ENCODE measurements at regions of chr9 and their contacts with region 1.

Region 1: DNA sequence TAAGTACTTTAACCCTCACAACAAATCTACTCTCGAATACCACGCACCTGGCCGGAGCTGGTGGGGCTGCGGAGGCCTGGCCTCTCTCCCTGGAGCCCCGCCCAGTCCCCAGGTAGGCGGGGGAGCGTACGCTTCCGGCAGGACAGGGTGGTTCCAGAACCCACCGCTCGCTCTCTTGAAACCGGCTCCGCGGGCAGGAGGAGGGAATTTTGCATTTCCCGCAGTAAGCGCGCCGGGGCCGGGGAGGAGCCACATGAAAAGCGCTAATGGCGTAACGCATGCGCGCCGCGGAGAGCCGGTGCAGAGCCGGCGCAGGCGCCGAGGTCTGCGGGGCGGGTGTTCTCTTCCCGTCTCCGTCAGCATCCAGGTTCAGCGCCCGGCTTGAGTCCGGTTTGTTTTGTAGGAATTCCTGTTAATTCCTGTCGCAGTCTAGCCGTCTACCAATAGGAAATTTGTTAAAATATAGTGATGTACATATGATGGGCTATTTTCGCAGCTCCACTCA is 20.8 kb downstream of the CAVIN4 start:
- DNase-seq: peak; percentile 82
- ATAC-seq: peak; percentile 87
- H3K4me3 Mint-ChIP-seq: peak overlapping the region; percentile 74
- H3K27ac Mint-ChIP-seq: peak overlapping the region; percentile 37
- H3K4me1 Mint-ChIP-seq: peaks cover 14% of the 10 kb centered on the region
- H3K27me3 Mint-ChIP-seq: no peaks in the 10 kb centered on the region
- CTCF ChIP-seq: no peak

Region 2: DNA sequence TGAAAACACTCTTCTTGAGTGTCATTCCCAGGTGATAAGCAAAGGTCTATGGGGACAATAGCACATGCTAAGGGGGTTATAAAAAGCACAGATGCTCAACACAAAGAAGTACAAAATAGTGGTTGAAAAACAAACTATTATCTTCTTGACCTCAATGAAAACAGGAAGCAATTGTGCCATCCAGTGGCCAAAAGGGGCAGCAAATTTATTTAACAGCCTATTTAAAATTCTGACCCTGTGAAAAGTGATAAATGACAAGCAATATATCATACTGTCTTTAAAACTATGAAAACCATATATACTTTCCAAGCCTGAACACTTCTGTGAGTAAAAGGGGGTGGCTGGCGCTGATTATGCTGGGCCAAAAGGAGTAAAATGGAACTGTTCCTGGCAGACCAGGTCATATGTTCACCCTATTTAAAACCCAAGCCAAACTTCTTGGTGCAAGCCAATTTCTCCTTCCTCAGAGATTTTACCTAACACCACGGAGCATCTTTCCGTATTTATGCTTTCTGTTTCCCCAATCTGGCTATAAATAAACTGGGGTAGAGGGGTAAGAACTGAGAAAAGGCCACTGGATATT is 275.6 kb before region 1 on chr9:
- CTCF ChIA-PET with region 1: interaction called, 8 read pairs
- POLR2A ChIA-PET with region 1: no interaction called
- intact Hi-C with region 1: loop called (anchors 10 kb)
- DNase-seq: peak; percentile 63
- ATAC-seq: no peak
- H3K4me3 Mint-ChIP-seq: no peak overlapping the region
- H3K27ac Mint-ChIP-seq: no peak overlapping the region
- H3K4me1 Mint-ChIP-seq: peaks cover 11% of the 10 kb centered on the region
- H3K27me3 Mint-ChIP-seq: no peaks in the 10 kb centered on the region
- CTCF ChIP-seq: peak; percentile 74

Region 3: DNA sequence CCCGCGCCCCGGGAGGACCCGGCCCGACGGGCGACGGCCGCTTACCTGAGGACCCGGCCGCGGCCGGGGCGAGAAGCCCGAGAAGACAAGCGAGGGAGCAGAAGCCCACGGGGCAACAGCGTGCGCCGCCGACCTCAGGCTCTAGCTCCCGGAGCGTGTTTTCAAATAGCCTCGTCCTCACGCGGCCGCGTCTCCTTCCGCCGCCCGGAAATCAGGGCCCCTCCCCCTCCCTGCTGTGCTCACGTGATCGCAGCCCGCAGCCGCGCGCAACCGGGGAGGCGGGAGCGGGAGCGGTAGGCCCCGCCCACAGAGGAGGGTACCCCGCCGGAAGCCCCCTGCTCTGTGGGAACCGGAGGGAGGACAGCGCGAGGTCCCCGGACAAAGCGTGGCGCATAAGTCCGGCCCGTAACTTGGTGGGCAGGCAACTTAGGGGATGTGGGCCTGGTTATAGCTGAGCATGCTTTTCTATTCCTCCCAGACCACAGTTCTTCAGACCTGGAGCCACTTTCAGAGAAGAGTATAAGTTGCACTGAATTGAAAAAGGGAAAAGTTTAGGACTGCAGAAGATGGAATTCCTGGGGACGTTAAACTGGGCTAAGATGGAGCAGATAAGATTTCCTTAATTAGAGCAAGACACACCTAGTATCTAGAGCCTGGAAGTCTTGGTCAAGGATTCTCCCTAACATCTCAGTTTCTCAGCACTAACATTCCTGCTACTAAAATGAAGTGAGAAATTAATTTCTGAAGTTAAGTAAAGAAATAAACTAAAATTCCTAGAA is 245.8 kb before region 1 on chr9 and contains the start of gene TEX10:
- CTCF ChIA-PET with region 1: interaction called, 3 read pairs
- POLR2A ChIA-PET with region 1: no interaction called
- intact Hi-C with region 1: loop called (anchors 10 kb)
- DNase-seq: peak; percentile 89
- ATAC-seq: peak; percentile 93
- H3K4me3 Mint-ChIP-seq: peak within 1 kb of the TSS; percentile 89
- H3K27ac Mint-ChIP-seq: peak within 1 kb of the TSS; percentile 81
- H3K4me1 Mint-ChIP-seq: peaks cover 49% of the 10 kb centered on the region
- H3K27me3 Mint-ChIP-seq: no peaks in the 10 kb centered on the region
- CTCF ChIP-seq: no peak
- total RNA-seq, gene TEX10: 26.6 to 30.2 TPM

Region 4: GRCh38 chr9:100505564-100506159 is 93.0 kb before region 1 on chr9:
- CTCF ChIA-PET with region 1: interaction called, 4 read pairs
- POLR2A ChIA-PET with region 1: no interaction called
- intact Hi-C with region 1: loop called (anchors 5 kb)
- DNase-seq: peak; percentile 89
- ATAC-seq: no peak
- H3K4me3 Mint-ChIP-seq: no peak overlapping the region
- H3K27ac Mint-ChIP-seq: no peak overlapping the region
- H3K4me1 Mint-ChIP-seq: no peaks in the 10 kb centered on the region
- H3K27me3 Mint-ChIP-seq: no peaks in the 10 kb centered on the region
- CTCF ChIP-seq: peak; percentile 90

Region 5: GRCh38 chr9:100567856-100568255 is 30.8 kb before region 1 on chr9:
- CTCF ChIA-PET with region 1: no interaction called
- POLR2A ChIA-PET with region 1: no interaction called
- intact Hi-C with region 1: no loop called
- DNase-seq: no peak
- ATAC-seq: no peak
- H3K4me3 Mint-ChIP-seq: no peak overlapping the region
- H3K27ac Mint-ChIP-seq: no peak overlapping the region
- H3K4me1 Mint-ChIP-seq: no peaks in the 10 kb centered on the region
- H3K27me3 Mint-ChIP-seq: no peaks in the 10 kb centered on the region
- CTCF ChIP-seq: no peak

Region 6: DNA sequence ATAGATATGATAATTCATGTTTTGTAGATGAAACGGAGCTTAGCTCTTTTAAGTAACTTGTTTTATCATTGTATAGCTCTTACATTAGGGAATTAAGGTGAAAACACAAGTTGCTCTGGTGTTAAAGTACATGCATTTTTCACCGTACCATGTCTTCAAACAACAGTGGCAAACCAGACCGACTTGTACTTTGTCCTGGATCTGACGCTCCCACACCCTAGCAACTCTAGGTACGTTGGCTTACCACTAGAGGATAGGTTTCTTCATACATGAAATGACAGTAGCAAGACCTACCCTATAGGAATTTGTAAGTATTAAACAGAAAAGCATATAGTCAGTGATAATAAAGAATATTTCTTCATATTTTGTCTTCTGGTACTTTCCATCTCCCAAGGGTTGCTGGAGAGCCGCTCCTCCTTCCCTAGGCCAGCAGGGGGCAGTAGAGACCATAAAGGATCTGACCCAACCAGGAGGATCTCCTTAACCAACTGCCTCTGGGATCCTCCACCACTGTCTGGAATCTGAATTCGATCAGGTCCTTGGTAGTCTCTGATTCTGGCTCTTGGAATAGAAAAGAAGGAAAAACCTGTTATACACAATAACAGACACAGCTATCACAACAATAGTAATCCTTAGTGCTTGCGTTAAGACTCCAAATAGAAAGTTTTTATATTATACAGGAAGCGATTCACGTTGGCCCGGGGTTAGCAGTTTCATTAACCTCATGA is 115.8 kb after region 1 on chr9:
- CTCF ChIA-PET with region 1: interaction called, 12 read pairs
- POLR2A ChIA-PET with region 1: no interaction called
- intact Hi-C with region 1: no loop called
- DNase-seq: peak; percentile 64
- ATAC-seq: no peak
- H3K4me3 Mint-ChIP-seq: no peak overlapping the region
- H3K27ac Mint-ChIP-seq: no peak overlapping the region
- H3K4me1 Mint-ChIP-seq: no peaks in the 10 kb centered on the region
- H3K27me3 Mint-ChIP-seq: peaks cover 11% of the 10 kb centered on the region
- CTCF ChIP-seq: peak; percentile 81

Region 7: GRCh38 chr9:101311758-101312420 is 713.2 kb after region 1 on chr9:
- CTCF ChIA-PET with region 1: interaction called, 28 read pairs
- POLR2A ChIA-PET with region 1: no interaction called
- intact Hi-C with region 1: loop called (anchors 2 kb)
- DNase-seq: peak; percentile 3
- ATAC-seq: peak; percentile 67
- H3K4me3 Mint-ChIP-seq: no peak overlapping the region
- H3K27ac Mint-ChIP-seq: no peak overlapping the region
- H3K4me1 Mint-ChIP-seq: no peaks in the 10 kb centered on the region
- H3K27me3 Mint-ChIP-seq: peaks cover 4% of the 10 kb centered on the region
- CTCF ChIP-seq: peak; percentile 63

Measured in activated CD8-positive, alpha-beta T cell treated with anti-CD3 and anti-CD28 coated beads for 36 hours (primary cell).